ENCODE measurements at regions of chr17 and their contacts with region 1.

Region 1: GRCh38 chr17:63819585-63820537 is 7.4 kb upstream of the PSMC5 start:
- DNase-seq: no peak

Region 2: GRCh38 chr17:63785556-63785955 is 34.3 kb before region 1 on chr17:
- intact Hi-C with region 1: no loop called
- DNase-seq: no peak

Region 3: GRCh38 chr17:64506576-64507477 is 687.0 kb after region 1 on chr17 and contains the start of gene CEP95:
- intact Hi-C with region 1: loop called in 1 of 2 experiments (anchors 5 kb)
- DNase-seq: peak; percentile 98
- total RNA-seq, gene CEP95: 29.7 to 33.0 TPM

Measured in posterior vena cava (tissue), 2 donors.